ENCODE measurements at regions of chr4 and their contacts with region 1.

Region 1: DNA sequence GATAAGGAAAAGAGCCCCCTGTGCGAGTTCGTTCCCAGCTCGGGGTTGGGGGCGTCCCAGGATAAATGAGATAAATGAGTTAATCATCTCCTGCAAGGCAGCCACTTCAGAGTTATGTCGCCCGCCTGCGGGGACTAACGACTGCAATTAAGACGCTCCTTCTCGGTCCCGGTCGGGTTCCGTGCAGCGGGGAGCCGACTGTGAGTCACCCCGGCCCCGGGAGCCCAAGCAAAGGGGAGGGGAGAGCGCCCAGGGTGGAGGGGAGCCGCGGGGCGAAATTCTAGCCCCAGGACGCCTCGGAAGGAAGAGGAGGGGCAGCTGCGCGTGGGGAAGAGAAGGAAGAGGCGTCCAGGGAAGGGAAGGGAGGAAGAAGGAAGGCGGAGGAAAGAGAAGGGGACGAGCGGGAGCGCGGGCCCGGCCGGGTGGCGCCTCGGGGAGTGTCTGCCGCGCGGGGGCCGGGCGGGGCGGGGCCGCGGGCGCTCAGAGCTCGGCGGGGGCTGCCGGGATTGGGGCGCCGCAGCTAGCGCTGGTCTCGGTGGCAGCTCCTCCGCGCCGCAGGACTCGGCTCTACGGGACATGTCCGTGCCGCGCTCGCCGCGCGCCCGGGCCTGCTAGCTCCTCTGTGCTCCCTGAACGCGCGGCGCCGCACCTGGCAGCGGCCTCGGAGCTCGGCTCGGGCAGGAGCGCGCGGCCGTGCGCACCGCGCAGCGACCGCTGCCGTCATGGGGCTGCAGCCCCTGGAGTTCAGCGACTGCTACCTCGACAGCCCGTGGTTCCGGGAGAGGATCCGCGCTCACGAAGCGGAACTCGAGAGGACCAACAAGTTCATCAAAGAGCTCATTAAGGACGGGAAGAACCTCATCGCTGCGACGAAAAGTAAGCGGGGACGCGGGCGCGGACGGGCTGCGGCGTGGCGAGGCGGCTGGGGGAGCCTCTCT is at the start of gene ARHGAP10:
- DNase-seq: peak; percentile 82
- ATAC-seq: peak; percentile 83
- H3K4me3 ChIP-seq: peak within 1 kb of the TSS; percentile 97
- H3K27ac ChIP-seq: peak within 1 kb of the TSS; percentile 97
- H3K4me1 ChIP-seq: peaks cover 16% of the 10 kb centered on the region
- H3K27me3 ChIP-seq: no peaks in the 10 kb centered on the region
- CTCF ChIP-seq: no peak
- POLR2A ChIP-seq: peak; percentile 73
- RAD21 ChIP-seq: no peak; the same call in 1 of the 2 replicates
- total RNA-seq, gene ARHGAP10: 29.4 and 42.8 TPM in 2 replicates

Region 2: GRCh38 chr4:147683717-147684700 is 47.8 kb before region 1 on chr4 and contains the start of gene PRMT9:
- CTCF ChIA-PET with region 1: interaction called, 3 read pairs
- POLR2A ChIA-PET with region 1: interaction called, 4 read pairs
- dilution Hi-C with region 1: no loop called
- in situ Hi-C with region 1: no loop called
- intact Hi-C with region 1: loop called (anchors 5 kb)
- DNase-seq: peak; percentile 97
- ATAC-seq: peak; percentile 99
- H3K4me3 ChIP-seq: peak within 1 kb of the TSS; percentile 82
- H3K27ac ChIP-seq: peak within 1 kb of the TSS; percentile 87
- H3K4me1 ChIP-seq: no peaks in the 10 kb centered on the region
- H3K27me3 ChIP-seq: no peaks in the 10 kb centered on the region
- CTCF ChIP-seq: no peak
- POLR2A ChIP-seq: peak; percentile 94
- RAD21 ChIP-seq: no peak; the same call in 1 of the 2 replicates
- total RNA-seq, gene PRMT9: 14.2 and 15.6 TPM in 2 replicates

Region 3: DNA sequence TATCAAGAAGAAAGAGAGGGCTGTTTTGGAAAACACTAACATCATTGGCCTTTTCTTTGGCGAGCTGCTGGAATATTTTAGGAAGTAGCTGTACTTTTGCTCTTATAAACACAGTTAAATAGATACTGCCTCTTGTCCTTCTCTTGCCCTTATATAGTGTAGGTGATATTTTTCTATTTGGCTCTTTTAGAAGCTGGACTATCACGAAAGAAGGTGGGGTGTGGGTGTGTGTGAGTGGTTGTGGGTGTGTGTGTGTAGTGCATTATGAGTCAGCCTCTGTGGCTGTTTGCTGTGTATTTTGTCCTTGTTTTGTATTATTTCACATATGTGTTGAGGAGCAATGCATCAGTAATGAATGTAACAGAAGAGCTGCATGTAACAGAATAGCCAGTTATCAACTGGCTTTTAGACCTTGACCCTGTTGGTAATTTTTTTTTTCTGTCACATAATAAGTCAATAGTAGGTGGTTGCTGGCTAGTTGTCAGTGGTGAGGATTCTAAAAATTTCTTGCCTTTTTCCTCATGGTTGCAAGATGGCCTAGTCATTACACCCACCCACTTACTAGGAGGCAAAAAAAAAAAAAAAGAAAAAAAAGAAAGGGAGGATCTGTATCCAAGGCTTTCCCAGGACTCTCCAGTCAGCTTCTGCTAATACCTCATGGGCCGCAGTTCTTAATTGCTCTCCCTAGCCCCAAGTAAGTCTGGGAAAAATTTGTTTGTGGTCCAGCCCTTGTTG is 23.9 kb after region 1 on chr4:
- CTCF ChIA-PET with region 1: no interaction called
- POLR2A ChIA-PET with region 1: interaction called, 4 read pairs
- dilution Hi-C with region 1: no loop called
- in situ Hi-C with region 1: no loop called
- intact Hi-C with region 1: loop called (anchors 2 kb)
- DNase-seq: peak; percentile 83
- ATAC-seq: peak; percentile 80
- H3K4me3 ChIP-seq: no peak overlapping the region
- H3K27ac ChIP-seq: peak overlapping the region; percentile 97
- H3K4me1 ChIP-seq: peaks cover 23% of the 10 kb centered on the region
- H3K27me3 ChIP-seq: no peaks in the 10 kb centered on the region
- CTCF ChIP-seq: no peak
- POLR2A ChIP-seq: no peak
- RAD21 ChIP-seq: no peak

Region 4: DNA sequence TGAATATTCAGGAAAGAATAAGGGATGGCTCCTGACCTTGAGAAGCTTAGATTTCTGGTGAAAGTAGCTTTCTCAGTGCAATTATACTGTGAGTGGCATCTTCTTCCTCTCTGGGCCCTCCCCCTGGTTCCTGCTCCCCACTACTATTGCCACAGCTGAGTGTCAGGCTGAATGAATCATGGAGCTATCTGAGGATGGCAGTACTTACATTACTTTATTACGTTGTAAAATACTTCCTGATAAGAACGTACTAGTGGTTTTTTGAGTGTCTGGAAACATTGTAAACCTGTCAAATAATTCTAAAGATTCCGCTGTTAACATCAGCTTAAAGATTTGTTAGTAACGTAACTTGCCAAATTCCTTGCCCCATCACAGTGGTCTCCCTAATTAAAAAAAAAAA is 36.3 kb after region 1 on chr4:
- CTCF ChIA-PET with region 1: interaction called, 3 read pairs
- POLR2A ChIA-PET with region 1: interaction called, 11 read pairs
- dilution Hi-C with region 1: no loop called
- in situ Hi-C with region 1: no loop called
- intact Hi-C with region 1: loop called (anchors 5 kb)
- DNase-seq: peak; percentile 87
- ATAC-seq: peak; percentile 72
- H3K4me3 ChIP-seq: no peak overlapping the region
- H3K27ac ChIP-seq: peak overlapping the region; percentile 10; the same call in 1 of the 2 replicates
- H3K4me1 ChIP-seq: peaks cover 16% of the 10 kb centered on the region
- H3K27me3 ChIP-seq: no peaks in the 10 kb centered on the region
- CTCF ChIP-seq: no peak
- POLR2A ChIP-seq: no peak
- RAD21 ChIP-seq: 0 out of 2 replicates have a peak, but pooled peaks have one; percentile 14

Region 5: DNA sequence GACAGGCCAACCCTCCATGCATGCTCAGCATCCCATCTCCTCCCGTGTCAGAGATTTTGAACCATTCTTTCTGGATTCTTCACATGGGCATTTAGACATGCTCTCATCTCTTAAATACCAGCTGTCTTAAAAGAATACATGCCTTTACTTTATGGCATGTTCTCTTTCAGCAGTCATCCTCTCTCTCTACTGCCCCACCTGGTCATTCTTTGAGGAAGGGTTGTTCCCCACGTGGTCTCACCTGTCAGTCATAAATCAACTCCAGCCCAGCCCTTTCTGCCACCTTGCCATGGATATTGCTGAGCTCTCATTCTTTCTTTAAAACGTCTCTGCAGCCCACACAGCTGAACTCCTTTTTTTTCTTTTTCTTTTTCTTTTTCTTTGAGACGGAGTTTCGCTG is 111.3 kb after region 1 on chr4:
- CTCF ChIA-PET with region 1: no interaction called
- POLR2A ChIA-PET with region 1: no interaction called
- dilution Hi-C with region 1: no loop called
- in situ Hi-C with region 1: no loop called
- intact Hi-C with region 1: loop called (anchors 5 kb)
- DNase-seq: no peak
- ATAC-seq: no peak
- H3K4me3 ChIP-seq: no peak overlapping the region
- H3K27ac ChIP-seq: no peak overlapping the region
- H3K4me1 ChIP-seq: peaks cover 18% of the 10 kb centered on the region
- H3K27me3 ChIP-seq: no peaks in the 10 kb centered on the region
- CTCF ChIP-seq: no peak
- POLR2A ChIP-seq: no peak
- RAD21 ChIP-seq: no peak

Region 6: DNA sequence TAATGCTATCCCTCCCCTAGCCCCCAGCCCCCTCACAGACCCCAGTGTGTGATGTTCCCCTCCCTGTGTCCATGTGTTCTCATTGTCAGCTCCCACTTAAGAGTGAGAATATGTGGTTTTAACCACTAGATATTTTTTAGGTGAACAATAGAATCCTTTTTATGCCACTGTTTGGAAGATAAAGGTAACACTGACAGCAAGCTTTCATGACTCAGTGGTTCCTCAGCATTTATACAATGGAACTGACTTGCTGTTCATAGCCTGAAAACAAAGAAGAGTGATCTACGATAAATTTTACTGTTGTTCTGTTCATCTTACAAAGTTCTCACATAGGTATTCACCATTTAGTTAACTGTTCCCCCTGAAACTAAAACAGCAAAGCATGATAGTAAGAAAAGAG is 147.8 kb after region 1 on chr4:
- CTCF ChIA-PET with region 1: no interaction called
- POLR2A ChIA-PET with region 1: no interaction called
- dilution Hi-C with region 1: no loop called
- in situ Hi-C with region 1: no loop called
- intact Hi-C with region 1: no loop called
- DNase-seq: no peak
- ATAC-seq: no peak
- H3K4me3 ChIP-seq: no peak overlapping the region
- H3K27ac ChIP-seq: no peak overlapping the region
- H3K4me1 ChIP-seq: peaks cover 2% of the 10 kb centered on the region
- H3K27me3 ChIP-seq: no peaks in the 10 kb centered on the region
- CTCF ChIP-seq: no peak
- POLR2A ChIP-seq: no peak
- RAD21 ChIP-seq: no peak

Region 7: GRCh38 chr4:148166132-148166591 is 434.3 kb after region 1 on chr4:
- CTCF ChIA-PET with region 1: no interaction called
- POLR2A ChIA-PET with region 1: no interaction called
- dilution Hi-C with region 1: no loop called
- in situ Hi-C with region 1: no loop called
- intact Hi-C with region 1: no loop called
- DNase-seq: no peak
- ATAC-seq: no peak
- H3K4me3 ChIP-seq: no peak overlapping the region
- H3K27ac ChIP-seq: no peak overlapping the region
- H3K4me1 ChIP-seq: no peaks in the 10 kb centered on the region
- H3K27me3 ChIP-seq: no peaks in the 10 kb centered on the region; the same call in 1 of the 2 replicates
- CTCF ChIP-seq: no peak
- POLR2A ChIP-seq: no peak
- RAD21 ChIP-seq: no peak